Activated naive CD8-positive, alpha-beta T cell treated with anti-CD3 and anti-CD28 coated beads, Interleukin-2, amount 10 ng/mL, durations not matched to agents 7 days and 5 days (primary cell): ENCODE measurements at regions of chr3 and their contacts with region 1.

Region 1: GRCh38 chr3:69051756-69052471 is at the start of gene TMF1:
- DNase-seq: peak; percentile 95
- ATAC-seq: peak; percentile 95
- H3K4me3 Mint-ChIP-seq: peak within 1 kb of the TSS; percentile 98
- H3K27ac Mint-ChIP-seq: peak within 1 kb of the TSS; percentile 97
- H3K4me1 Mint-ChIP-seq: peaks cover 39% of the 10 kb centered on the region
- H3K27me3 Mint-ChIP-seq: no peaks in the 10 kb centered on the region
- total RNA-seq, gene TMF1: 53.5 to 55.2 TPM

Region 2: DNA sequence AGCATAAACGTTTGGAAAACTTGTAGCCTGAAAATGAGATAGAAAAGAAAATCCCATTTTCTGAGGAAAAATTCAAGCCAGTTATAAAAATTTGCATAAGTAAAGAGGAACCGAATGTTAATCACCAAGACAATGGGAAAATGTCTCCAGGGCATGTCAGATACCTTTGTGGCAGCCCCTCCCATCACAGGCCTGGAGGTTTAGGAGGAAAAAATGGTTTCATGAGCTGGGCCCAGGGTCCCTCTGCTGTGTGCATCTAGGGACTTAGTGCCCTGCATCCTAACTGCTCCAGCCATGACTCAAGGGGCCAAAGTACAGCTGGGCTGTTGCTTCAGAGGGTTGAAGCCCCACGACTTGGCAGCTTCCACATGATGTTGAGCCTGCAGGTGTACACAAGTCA is 272.7 kb before region 1 on chr3:
- POLR2A ChIA-PET with region 1: no interaction called
- DNase-seq: no peak
- ATAC-seq: no peak
- H3K4me3 Mint-ChIP-seq: no peak overlapping the region
- H3K27ac Mint-ChIP-seq: no peak overlapping the region
- H3K4me1 Mint-ChIP-seq: no peaks in the 10 kb centered on the region
- H3K27me3 Mint-ChIP-seq: no peaks in the 10 kb centered on the region

Region 3: GRCh38 chr3:69092030-69092516 is 40.2 kb after region 1 on chr3:
- POLR2A ChIA-PET with region 1: interaction called, 63 read pairs
- DNase-seq: no peak
- ATAC-seq: peak; percentile 82
- H3K4me3 Mint-ChIP-seq: peak overlapping the region; percentile 93
- H3K27ac Mint-ChIP-seq: peak overlapping the region; percentile 84
- H3K4me1 Mint-ChIP-seq: peaks cover 71% of the 10 kb centered on the region
- H3K27me3 Mint-ChIP-seq: no peaks in the 10 kb centered on the region

Region 4: DNA sequence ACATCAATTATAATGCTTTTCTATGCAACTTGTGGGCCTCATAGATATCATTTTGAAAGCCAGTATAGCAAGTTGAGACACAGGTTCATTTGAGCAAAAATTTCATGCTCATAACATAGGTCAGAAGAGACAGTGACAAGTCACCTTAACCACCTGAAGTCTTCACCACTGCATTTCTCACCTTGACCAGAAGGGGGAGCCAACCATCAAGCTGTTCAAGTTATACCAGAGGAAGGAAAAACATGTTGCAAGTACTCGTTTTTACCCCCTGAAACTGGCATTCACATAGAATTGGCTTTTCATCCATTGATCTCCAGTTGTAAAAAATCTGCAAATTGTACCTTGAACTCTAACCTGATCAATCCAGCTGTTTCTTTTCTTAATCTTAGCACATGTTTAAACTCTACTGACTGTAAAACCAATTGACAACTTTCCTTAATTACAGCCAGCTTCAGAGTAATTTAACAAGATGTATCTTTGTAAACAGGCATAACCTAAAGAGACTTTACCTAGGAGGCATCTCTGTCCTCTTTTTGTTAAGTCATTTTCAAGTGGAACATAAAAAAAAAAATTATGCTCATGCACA is 69.1 kb after region 1 on chr3:
- POLR2A ChIA-PET with region 1: no interaction called
- DNase-seq: peak; percentile 56
- ATAC-seq: peak; percentile 78
- H3K4me3 Mint-ChIP-seq: no peak overlapping the region
- H3K27ac Mint-ChIP-seq: no peak overlapping the region
- H3K4me1 Mint-ChIP-seq: peaks cover 5% of the 10 kb centered on the region
- H3K27me3 Mint-ChIP-seq: no peaks in the 10 kb centered on the region